CD4-positive, alpha-beta T cell (primary cell): ENCODE measurements at regions of chr5 and their contacts with region 1.

Region 1: DNA sequence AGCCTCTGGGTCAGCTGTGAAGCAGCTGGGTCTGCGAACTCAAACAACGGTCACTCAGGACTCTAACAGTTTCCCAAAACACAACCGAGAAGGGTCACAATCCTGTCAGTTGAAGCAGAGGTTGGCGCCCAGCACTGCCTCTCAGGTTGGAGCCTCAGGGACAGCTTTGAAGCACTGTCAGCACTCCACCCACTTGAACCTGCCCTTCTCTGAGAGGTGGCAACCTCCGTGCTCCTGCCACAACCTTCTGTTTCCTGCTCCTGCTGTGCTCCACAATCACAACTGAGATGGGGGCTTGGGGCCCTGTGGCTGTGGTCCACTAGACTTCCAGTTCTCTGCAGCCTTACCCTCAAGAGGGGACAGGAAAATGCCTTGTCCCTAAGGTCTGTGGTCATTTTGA is 21.7 kb upstream of the LCP2 start:
- DNase-seq: peak in 2 of 14 experiments; percentile 33 to 56
- ATAC-seq: peak; percentile 69
- H3K4me3 ChIP-seq: no peak overlapping the region
- H3K4me3 Mint-ChIP-seq: no peak overlapping the region
- H3K27ac ChIP-seq: no peak overlapping the region
- H3K27ac Mint-ChIP-seq: no peak overlapping the region
- H3K4me1 ChIP-seq: peaks cover 12% of the 10 kb centered on the region
- H3K4me1 Mint-ChIP-seq: peaks cover 60% of the 10 kb centered on the region
- H3K27me3 ChIP-seq: no peaks in the 10 kb centered on the region
- H3K27me3 Mint-ChIP-seq: no peaks in the 10 kb centered on the region
- CTCF ChIP-seq: no peak

Region 2: DNA sequence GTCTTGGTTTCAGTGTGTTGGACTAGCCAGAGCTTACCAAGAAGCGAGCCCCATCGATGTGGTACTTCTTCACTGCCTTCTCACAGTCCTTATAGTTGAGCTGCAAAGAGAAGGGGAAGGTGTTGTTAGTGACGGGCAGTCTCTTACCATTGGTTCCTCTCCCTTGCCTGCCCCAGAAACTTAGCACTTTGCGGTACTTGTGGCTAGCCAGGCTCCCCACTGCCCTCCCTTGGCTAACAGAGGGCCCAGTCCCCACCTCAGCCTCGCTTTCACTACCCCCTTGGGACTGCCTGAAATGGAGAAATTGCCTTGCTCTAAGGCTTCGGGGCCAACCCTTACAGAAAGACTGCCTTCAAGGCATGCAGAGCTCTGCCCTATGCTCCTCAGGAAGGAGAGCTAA is 26.0 kb before region 1 on chr5:
- CTCF ChIA-PET with region 1: no interaction called
- POLR2A ChIA-PET with region 1: interaction called, 53 read pairs
- intact Hi-C with region 1: no loop called
- DNase-seq: peak in 5 of 14 experiments; percentile 39 to 83 (median 74)
- ATAC-seq: peak; percentile 10
- H3K4me3 ChIP-seq: peak overlapping the region; percentile 66
- H3K4me3 Mint-ChIP-seq: peak overlapping the region; percentile 98
- H3K27ac ChIP-seq: peak overlapping the region; percentile 49 to 98
- H3K27ac Mint-ChIP-seq: peak overlapping the region; percentile 96
- H3K4me1 ChIP-seq: peaks cover 66% of the 10 kb centered on the region
- H3K4me1 Mint-ChIP-seq: peaks cover 82% of the 10 kb centered on the region
- H3K27me3 ChIP-seq: no peaks in the 10 kb centered on the region
- H3K27me3 Mint-ChIP-seq: no peaks in the 10 kb centered on the region
- CTCF ChIP-seq: no peak